ENCODE measurements at regions of chr5 and their contacts with region 1.

Region 1: DNA sequence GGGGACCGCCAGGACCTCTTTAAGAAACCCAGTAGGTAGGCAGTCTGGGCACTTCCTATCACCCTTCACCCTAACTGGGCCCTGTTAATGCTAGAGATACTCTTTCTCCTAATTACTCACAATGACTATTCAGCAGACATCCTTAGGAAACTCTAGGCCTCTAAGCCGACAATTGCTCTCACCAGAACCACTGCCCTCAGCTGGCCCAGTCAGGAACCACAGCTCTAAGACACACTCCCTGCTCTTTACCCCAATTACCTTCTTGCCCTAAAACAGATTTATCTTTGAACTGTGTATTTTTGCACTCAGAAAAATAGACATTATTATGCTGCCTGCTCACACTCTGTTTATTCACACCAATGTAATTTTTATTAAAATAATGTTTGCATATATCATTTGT is 432.6 kb upstream of the SLC30A5 start:
- DNase-seq: peak in 1 of 2 donors; percentile 59
- ATAC-seq: peak; percentile 85

Region 2: GRCh38 chr5:68304421-68305052 is 356.7 kb before region 1 on chr5:
- intact Hi-C with region 1: loop called in 1 of 2 experiments (anchors 5 kb)
- DNase-seq: no peak
- ATAC-seq: peak; percentile 48

Region 3: DNA sequence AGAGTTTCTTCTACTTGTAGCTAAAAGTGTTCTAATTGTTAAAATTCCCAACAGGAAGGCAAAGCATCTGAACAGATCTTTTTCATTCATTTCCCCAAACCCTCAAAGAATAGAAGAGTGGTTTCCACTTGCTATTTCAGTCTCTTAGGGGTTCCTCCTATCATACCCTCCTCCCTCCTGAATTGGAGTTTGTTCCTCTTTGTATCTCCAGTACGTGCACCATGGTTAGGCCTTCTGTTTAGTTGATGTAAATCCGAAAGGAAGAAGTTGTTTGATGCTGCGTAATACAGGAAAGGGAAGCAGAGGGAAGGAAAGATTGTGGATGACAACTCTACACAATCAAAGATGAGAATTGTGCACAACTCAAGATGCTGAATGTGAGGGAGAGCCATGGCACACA is 142.1 kb before region 1 on chr5:
- intact Hi-C with region 1: no loop called
- DNase-seq: no peak
- ATAC-seq: no peak

Measured in left colon (tissue), 2 donors.